ENCODE measurements at regions of chr12 and their contacts with region 1.

Region 1: DNA sequence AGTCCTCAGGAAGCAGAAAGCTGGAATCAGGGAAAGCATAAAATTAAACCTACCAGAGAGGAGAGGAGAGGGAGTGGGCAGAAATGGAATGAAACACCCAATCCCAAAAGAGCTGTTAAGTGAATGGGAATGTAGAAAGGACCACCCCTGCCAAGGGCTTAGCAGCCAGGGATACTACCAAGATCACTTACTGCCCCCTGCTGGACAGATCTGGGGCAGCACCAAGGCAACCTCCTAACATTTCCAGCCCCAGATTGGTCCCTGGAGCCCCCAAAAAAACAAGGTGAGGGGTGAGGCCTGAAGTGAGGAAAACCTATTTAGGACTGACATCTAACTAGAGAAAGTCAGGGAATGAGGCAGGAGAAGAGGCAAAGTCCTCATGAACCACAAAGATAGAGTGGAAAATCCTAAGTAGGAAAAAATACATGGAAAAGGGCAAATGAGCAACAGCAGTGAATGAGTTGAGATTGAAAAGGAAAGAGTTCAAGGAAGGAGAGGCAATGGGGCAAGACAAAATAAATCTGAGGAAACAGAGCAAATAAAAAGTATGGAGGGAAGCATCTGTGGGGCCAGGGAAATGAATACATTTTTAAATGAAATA is 11.2 kb upstream of the FKBP11 start:
- DNase-seq: peak; percentile 85
- H3K4me3 Mint-ChIP-seq: no peak overlapping the region
- H3K27ac Mint-ChIP-seq: no peak overlapping the region
- H3K4me1 Mint-ChIP-seq: peaks cover 22% of the 10 kb centered on the region
- H3K27me3 Mint-ChIP-seq: no peaks in the 10 kb centered on the region

Region 2: GRCh38 chr12:48659863-48660262 is 276.6 kb before region 1 on chr12:
- CTCF ChIA-PET with region 1: no interaction called
- POLR2A ChIA-PET with region 1: no interaction called
- intact Hi-C with region 1: no loop called
- DNase-seq: no peak
- H3K4me3 Mint-ChIP-seq: no peak overlapping the region
- H3K27ac Mint-ChIP-seq: no peak overlapping the region
- H3K4me1 Mint-ChIP-seq: no peaks in the 10 kb centered on the region
- H3K27me3 Mint-ChIP-seq: no peaks in the 10 kb centered on the region

Region 3: GRCh38 chr12:48865434-48866290 is 70.8 kb before region 1 on chr12 and contains the start of gene RND1:
- CTCF ChIA-PET with region 1: interaction called, 3 read pairs
- POLR2A ChIA-PET with region 1: no interaction called
- intact Hi-C with region 1: loop called (anchors 5 kb)
- DNase-seq: peak; percentile 91
- H3K4me3 Mint-ChIP-seq: peak within 1 kb of the TSS; percentile 85
- H3K27ac Mint-ChIP-seq: peak within 1 kb of the TSS; percentile 74
- H3K4me1 Mint-ChIP-seq: peaks cover 20% of the 10 kb centered on the region
- H3K27me3 Mint-ChIP-seq: peaks cover 14% of the 10 kb centered on the region
- total RNA-seq, gene RND1: 2.4 to 3.5 TPM

Region 4: DNA sequence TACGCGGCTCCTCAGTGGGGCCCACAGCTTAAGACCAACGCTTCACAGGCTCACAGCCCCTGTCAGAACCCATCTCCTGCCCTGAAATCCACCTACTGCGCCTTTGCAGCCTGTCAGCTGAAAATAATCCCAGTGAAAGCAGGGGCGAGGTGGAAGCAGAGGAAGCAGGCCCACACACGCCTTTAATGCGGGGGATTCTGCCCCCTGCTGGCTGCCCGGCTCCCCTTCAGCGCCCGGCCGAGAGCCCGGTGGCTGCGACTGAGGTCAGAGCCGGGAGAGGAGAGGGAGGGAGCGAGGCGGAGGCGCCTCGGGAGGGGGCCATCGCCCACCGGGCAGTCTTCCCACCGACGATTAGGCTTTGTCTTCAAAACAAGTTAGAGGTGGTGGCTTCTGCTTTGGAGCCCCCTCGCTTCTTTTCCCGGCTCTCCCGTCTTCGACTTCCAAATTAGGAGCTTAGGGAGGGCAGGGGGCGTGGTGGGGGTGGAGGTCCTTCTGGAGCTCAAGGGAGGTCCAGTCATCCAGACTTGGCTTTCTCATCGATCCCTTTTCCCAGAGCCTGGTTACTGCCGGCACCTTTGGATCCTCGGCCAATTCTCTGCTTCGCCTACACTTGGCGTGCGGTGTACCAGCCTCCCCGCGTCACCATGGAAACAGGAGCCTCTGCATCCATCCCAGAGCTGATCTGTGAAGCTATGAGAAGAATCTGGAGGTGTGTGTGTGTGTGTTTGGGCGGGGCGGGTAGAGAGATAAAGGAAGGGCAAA is 45.6 kb before region 1 on chr12:
- CTCF ChIA-PET with region 1: interaction called, 22 read pairs
- POLR2A ChIA-PET with region 1: interaction called, 3 read pairs
- intact Hi-C with region 1: no loop called
- DNase-seq: peak; percentile 87
- H3K4me3 Mint-ChIP-seq: peak overlapping the region; percentile 32
- H3K27ac Mint-ChIP-seq: no peak overlapping the region
- H3K4me1 Mint-ChIP-seq: peaks cover 7% of the 10 kb centered on the region
- H3K27me3 Mint-ChIP-seq: peaks cover 12% of the 10 kb centered on the region

Region 5: DNA sequence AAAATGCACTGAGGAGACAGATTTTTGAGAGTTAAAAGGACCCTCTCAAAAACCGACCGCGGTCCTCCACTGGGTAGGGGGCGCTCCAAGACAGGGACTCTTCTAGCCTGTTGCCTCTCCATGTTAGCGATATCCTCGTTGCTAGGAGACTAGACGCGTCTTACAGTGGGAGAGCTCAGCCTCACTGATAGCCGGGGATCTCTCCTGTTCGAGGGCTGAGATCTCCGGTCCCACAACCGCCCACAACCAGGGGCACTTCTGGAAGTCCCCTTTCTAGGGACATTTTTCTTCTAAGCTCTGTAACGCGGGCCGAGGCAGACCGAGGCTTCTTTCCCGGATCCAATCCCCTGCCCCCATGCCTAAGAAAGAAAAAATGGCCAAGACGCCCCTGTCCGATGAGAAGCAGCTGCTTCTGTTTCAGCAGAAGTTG is 32.5 kb before region 1 on chr12:
- CTCF ChIA-PET with region 1: interaction called, 24 read pairs
- POLR2A ChIA-PET with region 1: no interaction called
- intact Hi-C with region 1: loop called (anchors 2 kb)
- DNase-seq: peak; percentile 89
- H3K4me3 Mint-ChIP-seq: peak overlapping the region; percentile 70
- H3K27ac Mint-ChIP-seq: no peak overlapping the region
- H3K4me1 Mint-ChIP-seq: peaks cover 2% of the 10 kb centered on the region
- H3K27me3 Mint-ChIP-seq: no peaks in the 10 kb centered on the region

Region 6: DNA sequence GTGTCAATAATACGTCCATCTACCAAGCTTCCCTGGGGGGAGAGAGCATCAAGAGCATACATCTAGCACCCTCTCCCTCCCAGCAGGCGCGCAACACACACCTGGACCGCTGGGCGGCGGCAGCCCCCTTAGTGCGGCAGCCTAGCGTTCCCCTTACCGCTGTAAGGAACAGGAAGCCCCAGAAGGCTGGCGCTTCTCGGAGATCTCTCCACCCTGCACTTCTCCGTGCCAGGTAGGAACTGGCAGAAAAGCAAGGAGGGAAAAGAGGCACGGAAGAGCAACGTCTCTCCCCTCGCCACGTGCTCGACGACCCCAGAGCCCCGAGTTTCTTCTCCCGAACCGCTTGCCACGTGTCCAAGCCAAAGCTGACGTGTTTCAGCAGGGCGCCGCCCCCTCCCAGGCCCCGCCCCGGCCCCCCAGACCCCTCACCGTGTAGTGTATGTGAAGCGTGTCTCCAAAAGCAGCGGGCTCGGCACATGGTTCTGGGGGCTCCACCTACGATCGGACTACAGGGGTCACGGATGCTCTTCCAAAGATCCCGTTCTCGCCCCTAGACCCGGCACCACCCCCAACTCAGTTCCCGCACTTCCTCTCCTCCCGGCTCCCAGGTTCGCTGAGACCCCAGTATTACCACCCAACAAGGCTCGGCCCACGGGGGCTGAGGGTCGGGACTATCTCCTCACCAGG is 11.7 kb before region 1 on chr12:
- CTCF ChIA-PET with region 1: interaction called, 15 read pairs
- POLR2A ChIA-PET with region 1: interaction called, 8 read pairs
- intact Hi-C with region 1: loop called (anchors 1 kb)
- DNase-seq: peak; percentile 82
- H3K4me3 Mint-ChIP-seq: peak overlapping the region; percentile 88
- H3K27ac Mint-ChIP-seq: peak overlapping the region; percentile 94
- H3K4me1 Mint-ChIP-seq: peaks cover 47% of the 10 kb centered on the region
- H3K27me3 Mint-ChIP-seq: no peaks in the 10 kb centered on the region

Region 7: DNA sequence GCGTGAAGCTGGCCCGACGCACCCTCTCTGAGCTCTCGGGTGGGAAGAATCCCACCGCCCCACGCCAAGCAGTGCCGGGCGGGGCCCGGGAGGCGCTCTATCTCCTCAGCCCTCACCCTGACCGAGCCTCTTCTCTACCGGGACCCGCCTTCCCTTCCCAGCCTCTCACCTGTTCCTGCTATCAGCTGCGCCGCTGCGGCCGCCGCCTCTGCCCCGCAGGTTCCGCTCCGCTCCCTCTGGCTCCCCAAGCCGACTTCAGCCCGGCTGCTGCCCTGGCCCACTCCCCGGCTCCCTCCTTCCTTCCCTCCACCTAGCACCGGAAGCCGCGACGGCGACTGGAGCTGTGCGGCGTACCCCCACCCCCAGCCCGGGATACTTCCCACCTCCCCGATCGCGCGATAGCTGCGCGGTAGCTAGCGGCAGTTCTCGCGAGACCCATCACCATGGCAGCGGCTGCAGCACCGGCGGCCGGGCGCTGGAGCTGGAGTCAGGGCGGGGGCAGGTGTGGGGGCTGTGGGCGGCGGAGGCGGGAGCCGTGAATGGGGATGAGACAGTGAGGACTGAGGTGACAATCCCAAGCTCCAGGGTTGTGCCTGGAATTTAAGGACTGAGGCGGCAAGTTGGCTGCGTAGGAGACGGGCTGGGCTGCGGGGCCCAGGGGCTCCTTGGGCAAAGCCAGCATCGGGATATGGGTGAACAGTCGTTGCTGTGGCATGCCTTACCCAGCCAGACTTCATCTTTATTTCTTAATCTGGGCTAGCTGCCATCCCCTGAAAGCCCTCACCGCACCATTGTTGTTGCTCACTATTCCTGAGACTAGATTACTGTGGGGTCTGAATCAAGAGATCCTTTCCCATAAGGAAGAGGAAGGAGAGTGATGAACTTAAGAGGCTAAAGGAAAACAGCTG is 20.9 kb after region 1 on chr12 and contains the start of gene ARF3:
- CTCF ChIA-PET with region 1: interaction called, 15 read pairs
- POLR2A ChIA-PET with region 1: no interaction called
- intact Hi-C with region 1: no loop called
- DNase-seq: peak; percentile 95
- H3K4me3 Mint-ChIP-seq: peak within 1 kb of the TSS; percentile 86
- H3K27ac Mint-ChIP-seq: peak within 1 kb of the TSS; percentile 83
- H3K4me1 Mint-ChIP-seq: peaks cover 28% of the 10 kb centered on the region
- H3K27me3 Mint-ChIP-seq: no peaks in the 10 kb centered on the region
- total RNA-seq, gene ARF3: 110 to 121 TPM

Measured in activated CD4-positive, alpha-beta memory T cell treated with anti-CD3 and anti-CD28 coated beads for 36 hours (primary cell).